ENCODE measurements at regions of chr14 and their contacts with region 1.

Region 1: GRCh38 chr14:76514613-76515012 is 138.7 kb downstream of the ESRRB start:
- DNase-seq: peak; percentile 48 to 70 (median 66)
- H3K4me3 ChIP-seq: no peak overlapping the region
- H3K27ac ChIP-seq: no peak overlapping the region
- H3K4me1 ChIP-seq: peaks cover 0 to 6% (median 4%) of the 10 kb centered on the region in 4 experiments
- H3K27me3 ChIP-seq: peaks cover 0 to 8% (median 0%) of the 10 kb centered on the region in 5 experiments

Region 2: DNA sequence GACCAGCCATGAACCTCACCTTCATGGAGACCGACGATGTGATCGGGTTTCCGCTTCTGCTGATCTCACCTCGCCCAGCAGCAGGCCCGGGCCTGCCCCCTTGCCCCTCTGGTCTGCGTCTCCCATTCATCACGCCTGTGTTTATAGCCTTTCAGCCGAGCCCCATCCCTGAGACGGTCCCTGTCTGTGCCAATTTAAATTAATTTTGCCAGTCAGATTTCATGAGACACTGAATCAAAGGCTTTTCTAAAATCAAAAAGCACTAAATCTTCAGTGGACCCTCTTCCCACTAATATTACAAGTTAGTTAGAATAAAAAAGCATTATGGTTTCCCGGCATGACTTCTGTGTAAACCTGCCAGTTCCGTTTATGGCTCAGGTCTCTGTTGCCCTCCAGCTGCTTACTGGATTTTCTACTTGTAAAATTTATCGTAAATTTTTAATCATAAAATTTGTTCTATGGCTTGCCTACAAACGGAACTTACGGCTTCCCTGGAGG is 17.3 kb after region 1 on chr14:
- CTCF ChIA-PET with region 1: no interaction called
- POLR2A ChIA-PET with region 1: no interaction called
- DNase-seq: no peak
- H3K4me3 ChIP-seq: no peak overlapping the region
- H3K27ac ChIP-seq: no peak overlapping the region
- H3K4me1 ChIP-seq: no peaks in the 10 kb centered on the region
- H3K27me3 ChIP-seq: no peaks in the 10 kb centered on the region

Region 3: GRCh38 chr14:76647697-76648298 is 133.2 kb after region 1 on chr14:
- CTCF ChIA-PET with region 1: interaction called, 27 read pairs
- POLR2A ChIA-PET with region 1: no interaction called
- DNase-seq: peak; percentile 31 to 67 (median 65)
- H3K4me3 ChIP-seq: no peak overlapping the region
- H3K27ac ChIP-seq: no peak overlapping the region
- H3K4me1 ChIP-seq: no peaks in the 10 kb centered on the region
- H3K27me3 ChIP-seq: peaks cover 0 to 6% (median 0%) of the 10 kb centered on the region in 5 experiments

Measured in common myeloid progenitor, CD34-positive (primary cell).